ENCODE measurements at regions of chr10 and their contacts with region 1.

Region 1: GRCh38 chr10:58334817-58335305 is at the start of gene UBE2D1:
- DNase-seq: peak; percentile 84
- H3K4me3 Mint-ChIP-seq: peak within 1 kb of the TSS; percentile 93
- H3K27ac Mint-ChIP-seq: peak within 1 kb of the TSS; percentile 53
- H3K4me1 Mint-ChIP-seq: peaks cover 25% of the 10 kb centered on the region
- H3K27me3 Mint-ChIP-seq: peaks cover 14% of the 10 kb centered on the region
- total RNA-seq, gene UBE2D1: 10.9 to 13.2 TPM

Region 2: GRCh38 chr10:58384999-58385783 is 50.3 kb after region 1 on chr10 and contains the start of gene TFAM:
- CTCF ChIA-PET with region 1: no interaction called
- POLR2A ChIA-PET with region 1: interaction called, 21 read pairs
- DNase-seq: peak; percentile 96
- H3K4me3 Mint-ChIP-seq: peak within 1 kb of the TSS; percentile 89
- H3K27ac Mint-ChIP-seq: peak within 1 kb of the TSS; percentile 84
- H3K4me1 Mint-ChIP-seq: peaks cover 46% of the 10 kb centered on the region
- H3K27me3 Mint-ChIP-seq: no peaks in the 10 kb centered on the region
- total RNA-seq, gene TFAM: 46.1 to 48.0 TPM